ENCODE measurements at regions of chr15 and their contacts with region 1.

Region 1: DNA sequence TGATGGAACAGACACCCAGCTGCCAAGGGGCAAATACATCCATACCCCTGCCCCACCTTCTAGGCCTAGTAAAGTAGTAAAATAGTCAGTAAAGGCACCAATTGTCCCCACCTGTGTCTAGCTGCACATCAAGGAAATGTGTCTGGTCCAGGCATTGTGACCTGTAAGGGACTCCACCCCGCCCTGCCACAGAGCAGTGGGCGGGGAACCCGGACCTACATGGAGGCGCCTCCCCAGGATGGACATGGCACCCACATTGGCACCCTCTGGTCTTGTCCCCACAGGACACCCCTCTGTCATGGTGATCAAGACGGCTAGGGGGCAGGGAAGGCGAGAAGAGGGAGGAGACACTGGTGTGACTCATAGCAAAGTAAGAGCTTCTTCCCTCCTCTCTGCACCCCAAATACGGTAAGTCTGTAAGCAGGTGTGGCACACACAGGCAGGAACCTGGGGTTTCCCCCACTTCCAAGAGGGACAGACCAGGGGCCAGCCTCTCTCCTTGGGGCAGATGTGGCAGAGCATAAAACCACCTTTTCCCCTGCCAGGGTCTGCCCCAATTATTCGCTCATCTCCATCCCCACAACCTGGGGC is 13.5 kb upstream of the LINGO1 start:
- DNase-seq: no peak
- H3K4me3 ChIP-seq: no peak overlapping the region
- H3K27ac ChIP-seq: no peak overlapping the region
- H3K4me1 ChIP-seq: no peaks in the 10 kb centered on the region
- CTCF ChIP-seq: no peak

Region 2: DNA sequence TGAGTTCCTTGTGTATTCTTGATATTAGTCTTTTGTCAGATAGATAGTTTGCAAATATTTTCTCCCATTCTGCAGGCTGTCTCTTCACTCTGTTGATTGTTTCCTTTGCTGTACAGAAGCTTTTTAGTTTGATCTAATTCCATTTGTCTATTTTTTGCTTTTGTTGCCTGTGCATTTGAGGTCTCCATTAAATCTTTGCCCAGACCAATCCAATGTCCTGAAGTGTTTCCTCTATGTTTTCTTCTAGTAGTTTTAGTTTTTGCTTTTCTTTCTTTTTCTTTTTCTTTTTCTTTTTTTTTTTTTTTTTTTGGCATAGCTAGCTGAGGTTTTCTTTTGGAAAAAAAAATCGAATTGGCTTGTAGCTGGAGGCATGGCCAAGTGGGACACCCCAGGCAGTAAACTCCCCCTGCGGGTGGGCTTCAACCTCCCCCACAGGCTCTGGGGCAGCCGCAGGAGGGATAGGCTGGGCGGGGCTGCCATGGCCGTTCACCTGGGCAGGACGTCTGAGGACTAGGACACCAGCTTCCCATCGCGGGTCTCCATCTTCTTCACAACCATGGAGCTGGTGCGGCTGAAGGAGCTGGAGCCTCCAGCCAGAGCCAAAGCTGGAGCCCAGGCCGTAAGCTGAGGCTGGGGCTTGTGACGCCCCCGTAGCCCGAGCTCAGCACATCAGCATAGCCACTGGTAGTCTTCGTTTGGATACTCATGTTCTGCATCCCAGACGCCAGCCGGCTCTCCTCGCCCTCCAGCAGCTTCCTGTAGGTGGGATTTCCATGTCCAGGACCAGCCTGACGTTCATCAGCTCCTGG is 667.5 kb before region 1 on chr15:
- CTCF ChIA-PET with region 1: no interaction called
- POLR2A ChIA-PET with region 1: interaction called, 11 read pairs
- intact Hi-C with region 1: no loop called
- DNase-seq: no peak
- H3K4me3 ChIP-seq: no peak overlapping the region
- H3K27ac ChIP-seq: no peak overlapping the region
- H3K4me1 ChIP-seq: no peaks in the 10 kb centered on the region
- CTCF ChIP-seq: no peak

Region 3: GRCh38 chr15:77688693-77689092 is 42.5 kb after region 1 on chr15:
- CTCF ChIA-PET with region 1: interaction called, 12 read pairs
- POLR2A ChIA-PET with region 1: no interaction called
- intact Hi-C with region 1: no loop called
- DNase-seq: no peak
- H3K4me3 ChIP-seq: no peak overlapping the region
- H3K27ac ChIP-seq: no peak overlapping the region
- H3K4me1 ChIP-seq: no peaks in the 10 kb centered on the region
- CTCF ChIP-seq: no peak

Region 4: DNA sequence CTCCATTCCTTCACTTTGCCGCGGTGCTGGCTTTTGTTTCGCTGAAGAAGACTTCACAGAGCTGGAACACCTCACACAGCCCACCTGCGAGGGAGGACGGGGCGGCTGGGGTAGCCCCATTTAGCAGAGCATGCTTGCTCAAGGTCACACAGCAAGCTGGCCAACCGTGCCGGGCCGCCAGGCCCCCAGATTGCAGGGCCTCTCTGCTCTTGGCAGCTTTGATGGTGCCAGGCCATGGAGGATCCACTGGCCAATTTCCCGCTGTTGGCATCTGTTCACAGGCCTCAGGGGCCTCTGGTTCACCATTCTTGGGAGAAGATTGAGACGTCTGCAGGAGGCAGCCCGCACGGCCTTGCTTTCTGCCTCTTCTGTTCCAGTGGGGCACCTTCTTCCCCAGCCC is 64.4 kb after region 1 on chr15:
- CTCF ChIA-PET with region 1: interaction called, 26 read pairs
- POLR2A ChIA-PET with region 1: no interaction called
- intact Hi-C with region 1: no loop called
- DNase-seq: no peak
- H3K4me3 ChIP-seq: no peak overlapping the region
- H3K27ac ChIP-seq: no peak overlapping the region
- H3K4me1 ChIP-seq: no peaks in the 10 kb centered on the region
- CTCF ChIP-seq: no peak

Measured in OCI-LY7 (cell line).